Common myeloid progenitor, CD34-positive (primary cell): ENCODE measurements at regions of chr17 and their contacts with region 1.

Region 1: GRCh38 chr17:27544350-27545131 is 86.4 kb upstream of the LGALS9 start:
- DNase-seq: peak; percentile 92 to 96 (median 96)
- H3K4me3 ChIP-seq: peak overlapping the region in 3 of 7 experiments; percentile 7 to 51 (median 17)
- H3K27ac ChIP-seq: no peak overlapping the region
- H3K4me1 ChIP-seq: peaks cover 25 to 66% (median 51%) of the 10 kb centered on the region in 4 experiments
- H3K27me3 ChIP-seq: peaks cover 0 to 5% (median 0%) of the 10 kb centered on the region in 5 experiments

Region 2: GRCh38 chr17:27438348-27438998 is 106.1 kb before region 1 on chr17:
- CTCF ChIA-PET with region 1: no interaction called
- POLR2A ChIA-PET with region 1: no interaction called
- DNase-seq: no peak
- H3K4me3 ChIP-seq: no peak overlapping the region
- H3K27ac ChIP-seq: no peak overlapping the region
- H3K4me1 ChIP-seq: no peaks in the 10 kb centered on the region
- H3K27me3 ChIP-seq: no peaks in the 10 kb centered on the region

Region 3: DNA sequence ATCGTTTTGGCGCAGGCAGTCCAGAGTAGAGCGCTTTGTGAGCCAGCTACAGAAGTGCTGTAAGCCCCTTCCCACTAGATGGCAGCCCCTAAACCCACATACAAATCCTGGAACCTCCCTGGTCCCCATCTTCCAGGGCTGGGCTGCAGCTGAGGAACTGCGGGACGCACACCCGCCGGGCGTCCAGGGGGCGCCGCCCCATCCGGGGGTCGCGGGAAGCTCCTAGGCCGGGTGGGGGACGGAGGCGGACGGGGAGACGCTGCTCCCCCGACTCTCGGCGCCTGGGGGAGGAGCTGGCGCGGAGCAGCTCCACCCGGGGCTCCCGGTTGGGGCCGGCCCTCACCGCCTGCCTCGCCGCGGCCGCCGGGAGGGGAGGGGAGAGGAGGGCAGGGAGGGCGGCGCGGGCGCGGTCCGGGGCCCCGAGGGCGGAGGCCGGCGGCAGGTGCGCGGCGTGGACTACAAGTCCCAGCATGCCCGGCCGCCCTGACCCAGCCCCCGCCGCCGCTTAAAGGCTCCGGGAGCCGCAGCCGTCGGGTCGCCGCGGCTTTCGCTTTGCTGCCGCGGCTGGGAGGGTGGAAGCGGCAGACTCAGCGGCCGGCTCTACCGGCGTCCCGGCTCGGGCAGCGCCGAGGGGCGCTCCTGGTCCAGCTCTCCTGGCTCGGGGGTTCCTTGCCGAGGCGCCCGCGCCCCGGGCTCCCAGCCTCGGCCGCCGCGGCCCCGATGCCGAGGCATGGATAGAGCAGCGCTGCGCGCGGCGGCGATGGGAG is 88.4 kb before region 1 on chr17 and contains the start of gene KSR1:
- CTCF ChIA-PET with region 1: interaction called, 12 read pairs
- POLR2A ChIA-PET with region 1: no interaction called
- DNase-seq: peak; percentile 87 to 94 (median 89)
- H3K4me3 ChIP-seq: peak within 1 kb of the TSS; percentile 46 to 92 (median 77)
- H3K27ac ChIP-seq: peak within 1 kb of the TSS in 1 of 2 experiments; percentile 57
- H3K4me1 ChIP-seq: peaks cover 3 to 29% (median 24%) of the 10 kb centered on the region in 4 experiments
- H3K27me3 ChIP-seq: no peaks in the 10 kb centered on the region

Region 4: DNA sequence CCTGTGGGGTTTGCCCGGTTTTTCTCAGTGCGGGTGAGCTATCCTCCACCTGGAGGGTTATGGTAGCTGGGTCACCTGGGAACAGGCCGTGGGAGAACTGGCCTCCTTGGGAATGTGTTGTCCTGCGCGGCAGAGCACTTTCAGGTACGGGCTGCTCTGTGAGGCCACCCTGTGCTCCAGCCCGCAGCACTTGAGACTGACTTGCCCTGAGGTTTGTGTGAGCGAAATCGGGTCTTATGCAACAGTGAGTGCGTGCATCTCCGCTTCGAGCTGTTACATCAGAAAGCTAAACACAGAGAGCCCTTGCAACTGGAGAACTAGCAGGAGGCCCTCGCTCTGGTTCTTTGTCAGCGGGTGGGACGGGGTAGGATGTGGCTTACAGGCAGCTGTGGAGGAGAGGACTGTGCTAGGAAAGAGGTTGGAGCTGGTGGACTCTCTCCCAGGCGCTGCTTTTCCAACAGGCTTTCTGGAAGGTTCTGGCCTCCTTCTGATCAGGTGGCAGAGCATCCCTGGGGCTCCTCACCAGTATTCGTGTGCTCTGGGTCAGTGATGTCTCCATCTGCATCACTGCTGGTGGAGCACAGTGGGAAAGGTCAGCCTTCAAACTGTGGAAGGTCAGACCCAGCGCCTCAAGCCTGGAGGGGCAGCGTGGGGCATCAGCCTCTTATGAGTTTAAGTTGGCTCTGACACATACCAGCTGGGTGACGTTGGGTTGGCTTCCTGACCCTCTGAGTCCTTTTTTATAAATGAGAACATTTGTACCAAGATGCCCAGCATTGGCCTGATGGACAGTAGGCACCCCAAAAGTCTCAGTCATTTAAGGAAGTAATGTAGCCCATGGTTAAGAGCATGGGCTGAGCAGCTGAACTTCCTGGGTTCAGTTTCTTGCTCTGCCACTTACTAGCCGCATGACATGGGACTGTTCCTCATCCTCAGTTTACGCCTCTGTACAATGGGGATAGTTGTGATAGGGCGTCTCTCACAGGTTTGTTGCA is 12.0 kb before region 1 on chr17:
- CTCF ChIA-PET with region 1: interaction called, 17 read pairs
- POLR2A ChIA-PET with region 1: interaction called, 5 read pairs
- DNase-seq: peak; percentile 67 to 89 (median 89)
- H3K4me3 ChIP-seq: peak overlapping the region in 1 of 7 experiments; percentile 31
- H3K27ac ChIP-seq: peak overlapping the region in 1 of 2 experiments; percentile 76
- H3K4me1 ChIP-seq: peaks cover 35 to 87% (median 54%) of the 10 kb centered on the region in 4 experiments
- H3K27me3 ChIP-seq: no peaks in the 10 kb centered on the region

Region 5: GRCh38 chr17:27569257-27569722 is 24.7 kb after region 1 on chr17:
- CTCF ChIA-PET with region 1: interaction called, 16 read pairs
- POLR2A ChIA-PET with region 1: no interaction called
- DNase-seq: peak; percentile 57 to 76 (median 71)
- H3K4me3 ChIP-seq: no peak overlapping the region
- H3K27ac ChIP-seq: peak overlapping the region in 1 of 2 experiments; percentile 37
- H3K4me1 ChIP-seq: peaks cover 0 to 61% (median 24%) of the 10 kb centered on the region in 4 experiments
- H3K27me3 ChIP-seq: no peaks in the 10 kb centered on the region